Colonic mucosa (tissue), 4 donors: ENCODE measurements at regions of chr2 and their contacts with region 1.

Region 1: DNA sequence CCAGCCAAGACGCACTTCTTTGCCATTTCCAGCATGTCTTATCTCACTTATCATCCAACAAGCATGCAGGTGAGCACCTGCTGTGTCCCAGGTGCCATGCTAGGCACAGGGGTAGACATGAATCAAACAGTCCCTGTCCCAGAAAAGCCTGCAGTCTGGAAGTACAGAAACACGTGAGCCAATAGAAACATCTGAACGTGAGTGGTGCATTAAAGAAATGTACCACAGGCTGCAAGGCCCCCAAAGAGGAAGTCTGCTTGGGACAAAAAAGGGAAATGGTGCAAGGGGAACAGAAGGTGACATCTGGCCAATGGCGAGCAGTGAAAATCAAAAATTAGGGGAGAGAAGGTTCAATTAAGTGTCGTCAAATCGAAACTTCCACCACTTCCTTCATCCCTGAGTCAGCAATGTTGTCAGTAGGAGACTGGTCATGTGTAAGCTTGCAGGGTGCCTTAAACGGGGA is 17.6 kb upstream of the TMEM247 start:
- DNase-seq: no peak
- H3K4me3 ChIP-seq: no peak overlapping the region
- H3K27ac ChIP-seq: no peak overlapping the region
- H3K4me1 ChIP-seq: no peaks in the 10 kb centered on the region
- H3K27me3 ChIP-seq: no peaks in the 10 kb centered on the region
- CTCF ChIP-seq: no peak

Region 2: DNA sequence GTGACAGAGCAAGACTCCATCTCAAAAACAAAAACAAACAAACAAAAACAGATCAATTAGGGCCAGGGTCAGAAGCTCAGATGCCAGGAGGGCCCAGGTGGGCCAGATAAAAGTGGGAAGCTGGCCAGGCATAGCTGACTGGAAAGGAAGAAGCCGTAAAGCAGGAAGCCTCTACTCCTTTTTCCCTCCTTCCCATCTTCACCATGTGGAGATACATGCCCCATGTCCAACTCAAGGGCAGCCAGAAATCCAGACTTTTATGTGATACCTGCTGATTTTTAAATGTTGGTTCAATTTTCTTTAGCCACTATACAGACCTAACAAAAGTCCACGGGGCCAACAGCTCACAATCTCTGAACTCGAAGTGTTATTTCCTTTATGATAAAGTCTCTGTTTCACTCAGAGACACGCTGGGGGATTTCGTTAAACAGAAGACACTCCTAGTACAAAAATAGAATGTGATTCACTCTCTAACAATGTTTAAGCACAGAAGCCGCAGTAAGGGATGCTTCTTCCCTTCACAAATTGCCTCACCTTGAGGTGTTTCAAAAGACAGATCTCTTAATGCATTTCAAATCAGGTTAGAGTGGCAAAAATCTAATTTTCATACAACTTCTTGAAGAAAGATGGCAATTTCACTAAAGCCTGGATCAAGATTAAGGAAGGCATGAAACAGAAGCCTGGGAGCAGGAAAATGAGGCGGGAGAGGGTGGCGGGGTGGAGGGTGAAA is 31.7 kb after region 1 on chr2:
- intact Hi-C with region 1: no loop called
- DNase-seq: no peak
- H3K4me3 ChIP-seq: no peak overlapping the region
- H3K27ac ChIP-seq: no peak overlapping the region
- H3K4me1 ChIP-seq: no peaks in the 10 kb centered on the region
- H3K27me3 ChIP-seq: no peaks in the 10 kb centered on the region
- CTCF ChIP-seq: no peak

Region 3: DNA sequence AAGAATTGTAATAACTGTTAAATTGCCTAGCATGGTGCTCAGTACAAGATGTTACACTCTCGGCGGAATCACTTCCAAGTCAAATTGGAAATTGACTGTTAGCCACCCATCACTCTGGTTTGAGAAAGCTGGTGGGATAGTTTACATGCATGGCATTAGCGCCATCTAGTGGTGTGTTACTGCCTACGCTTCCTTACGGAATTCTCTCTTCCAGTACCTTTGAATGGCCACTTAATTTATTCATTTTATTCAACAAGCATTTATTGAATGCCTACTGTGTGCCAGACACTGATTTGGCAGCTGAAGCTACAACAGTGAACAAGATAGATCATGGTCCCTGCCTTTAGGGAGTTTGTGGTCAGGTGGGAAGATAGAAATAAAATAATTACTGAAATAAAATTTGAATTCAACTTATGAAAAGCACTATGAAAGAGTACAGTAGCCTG is 188.8 kb after region 1 on chr2:
- intact Hi-C with region 1: loop called (anchors 2 kb)
- DNase-seq: peak; percentile 79
- H3K4me3 ChIP-seq: no peak overlapping the region
- H3K27ac ChIP-seq: no peak overlapping the region
- H3K4me1 ChIP-seq: no peaks in the 10 kb centered on the region
- H3K27me3 ChIP-seq: no peaks in the 10 kb centered on the region
- CTCF ChIP-seq: peak; percentile 98

Region 4: DNA sequence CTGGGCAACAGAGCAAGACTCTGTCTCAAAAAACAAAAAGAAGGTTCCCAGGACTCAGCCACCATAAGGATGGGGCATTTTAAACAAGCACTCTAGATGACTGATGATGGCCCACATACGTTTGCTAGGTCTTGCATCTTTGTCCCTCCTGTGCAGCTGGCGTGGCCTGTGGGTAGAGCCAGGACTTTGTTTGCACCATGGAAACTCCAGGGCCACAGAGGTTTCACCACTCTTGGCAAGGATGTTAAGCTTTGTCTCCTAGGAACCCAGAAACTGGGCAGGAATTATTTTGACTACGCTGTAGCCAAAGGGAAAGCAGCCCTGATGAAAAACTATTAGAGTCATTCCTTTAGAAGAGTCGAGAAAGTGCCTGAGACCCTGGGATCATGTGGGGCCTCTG is 768.7 kb after region 1 on chr2:
- intact Hi-C with region 1: no loop called
- DNase-seq: no peak
- H3K4me3 ChIP-seq: no peak overlapping the region
- H3K27ac ChIP-seq: no peak overlapping the region
- H3K4me1 ChIP-seq: peaks cover 15% of the 10 kb centered on the region
- H3K27me3 ChIP-seq: no peaks in the 10 kb centered on the region
- CTCF ChIP-seq: no peak